ENCODE measurements at regions of chr2 and their contacts with region 1.

Region 1: GRCh38 chr2:121649596-121650314 is 493 bp upstream of the CLASP1 start:
- DNase-seq: peak; percentile 97
- ATAC-seq: peak; percentile 96
- H3K4me3 Mint-ChIP-seq: peak overlapping the region; percentile 93
- H3K27ac Mint-ChIP-seq: peak overlapping the region; percentile 98
- H3K4me1 Mint-ChIP-seq: peaks cover 64% of the 10 kb centered on the region
- H3K27me3 Mint-ChIP-seq: no peaks in the 10 kb centered on the region
- CTCF ChIP-seq: no peak

Region 2: GRCh38 chr2:121596221-121597080 is 53.3 kb before region 1 on chr2:
- CTCF ChIA-PET with region 1: interaction called, 5 read pairs
- POLR2A ChIA-PET with region 1: interaction called, 5 read pairs
- intact Hi-C with region 1: loop called (anchors 10 kb)
- DNase-seq: peak; percentile 60
- ATAC-seq: peak; percentile 92
- H3K4me3 Mint-ChIP-seq: peak overlapping the region; percentile 77
- H3K27ac Mint-ChIP-seq: peak overlapping the region; percentile 94
- H3K4me1 Mint-ChIP-seq: peaks cover 47% of the 10 kb centered on the region
- H3K27me3 Mint-ChIP-seq: no peaks in the 10 kb centered on the region
- CTCF ChIP-seq: no peak

Region 3: DNA sequence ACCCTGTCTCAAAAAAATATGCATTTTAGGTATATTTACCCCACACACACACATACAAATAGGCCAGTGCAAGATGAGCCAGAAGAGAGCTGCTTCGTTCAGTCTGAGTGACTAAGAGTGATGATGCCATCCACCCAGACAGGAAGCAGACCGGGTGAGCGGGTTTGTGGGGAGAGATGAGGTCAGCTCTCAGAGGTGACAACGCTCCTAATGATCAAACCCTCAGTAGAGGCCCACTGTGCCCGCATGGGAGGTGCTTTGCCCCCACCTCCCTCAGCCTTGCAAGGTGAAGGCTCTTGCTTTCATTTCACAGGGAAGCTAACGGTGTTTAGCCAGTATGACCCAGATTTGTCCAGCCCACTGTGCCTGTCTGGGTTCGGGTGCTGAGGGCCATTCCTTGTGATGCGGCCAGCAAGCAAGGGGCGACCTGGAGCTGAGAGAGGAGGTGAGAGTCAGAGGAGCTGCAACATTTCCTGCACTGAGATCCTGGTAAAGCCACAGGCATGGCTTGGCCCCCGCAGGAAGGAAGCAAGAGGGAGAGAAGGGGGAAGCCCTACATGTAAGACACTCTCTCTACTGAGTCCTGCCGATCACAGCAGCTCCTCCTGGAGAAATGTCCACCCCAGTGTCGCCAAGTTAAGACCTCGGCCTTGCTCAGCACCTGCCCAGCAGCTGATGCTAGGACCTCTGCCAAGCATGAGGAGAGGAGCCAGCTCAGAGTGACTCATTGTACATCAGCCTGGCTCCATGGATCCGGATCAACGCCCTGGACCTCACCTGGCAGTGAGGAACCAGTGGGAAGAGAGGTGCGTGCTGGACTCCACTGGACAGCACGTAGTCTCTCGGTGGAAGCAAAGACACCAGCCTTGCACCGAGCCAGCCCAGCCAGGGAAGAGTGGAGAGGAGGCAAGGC is 49.9 kb after region 1 on chr2:
- CTCF ChIA-PET with region 1: interaction called, 4 read pairs
- POLR2A ChIA-PET with region 1: interaction called, 29 read pairs
- intact Hi-C with region 1: loop called (anchors 5 kb)
- DNase-seq: peak; percentile 97
- ATAC-seq: peak; percentile 97
- H3K4me3 Mint-ChIP-seq: peak overlapping the region; percentile 71
- H3K27ac Mint-ChIP-seq: peak overlapping the region; percentile 93
- H3K4me1 Mint-ChIP-seq: peaks cover 42% of the 10 kb centered on the region
- H3K27me3 Mint-ChIP-seq: no peaks in the 10 kb centered on the region
- CTCF ChIP-seq: no peak

Region 4: DNA sequence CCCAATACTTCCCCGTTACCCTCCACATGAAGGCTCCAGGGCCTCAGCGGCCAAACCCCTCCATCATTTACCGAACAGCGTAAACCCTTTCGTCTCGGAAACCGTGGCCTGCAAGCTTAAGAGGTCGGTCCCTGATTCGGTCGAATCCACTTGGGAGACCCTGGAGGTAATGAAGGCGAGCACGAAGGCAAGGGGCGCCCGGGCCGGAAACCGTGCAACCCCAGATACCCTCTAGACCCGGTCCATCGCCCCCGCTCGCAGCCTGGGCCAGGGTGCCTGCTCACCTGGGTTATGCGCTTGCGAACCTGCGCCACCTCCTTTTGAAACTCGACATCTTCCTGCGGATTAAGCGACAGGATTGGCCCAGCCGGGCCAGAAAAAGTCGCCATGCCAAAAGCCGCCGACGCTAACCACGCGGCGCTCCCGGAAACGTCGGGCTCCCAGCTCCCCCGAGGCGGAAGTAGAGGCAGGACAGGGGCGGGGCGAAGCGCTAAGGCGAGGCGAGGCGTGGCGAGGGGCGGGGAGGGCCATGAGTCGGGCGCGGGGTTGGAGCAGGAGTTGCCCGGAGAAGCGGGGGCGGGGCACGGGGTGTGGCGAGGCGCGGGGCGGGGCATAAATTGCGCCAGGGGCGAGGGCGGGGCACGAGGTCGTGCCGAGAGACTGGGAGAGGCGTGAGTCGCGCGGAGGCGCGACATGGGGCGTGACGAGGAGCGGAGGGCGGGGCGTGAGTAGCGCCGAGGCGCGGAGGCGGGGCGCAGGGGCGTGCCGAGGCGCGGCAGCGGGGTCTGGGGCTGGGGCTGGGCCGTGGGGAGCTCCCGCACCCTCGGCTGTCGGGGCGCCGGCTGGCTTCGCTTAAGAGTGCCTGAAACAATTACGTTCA is 86.9 kb after region 1 on chr2 and contains the start of gene NIFK:
- CTCF ChIA-PET with region 1: interaction called, 3 read pairs
- POLR2A ChIA-PET with region 1: interaction called, 10 read pairs
- intact Hi-C with region 1: no loop called
- DNase-seq: peak; percentile 100
- ATAC-seq: peak; percentile 93
- H3K4me3 Mint-ChIP-seq: peak within 1 kb of the TSS; percentile 89
- H3K27ac Mint-ChIP-seq: peak within 1 kb of the TSS; percentile 97
- H3K4me1 Mint-ChIP-seq: peaks cover 41% of the 10 kb centered on the region
- H3K27me3 Mint-ChIP-seq: no peaks in the 10 kb centered on the region
- CTCF ChIP-seq: no peak
- total RNA-seq, gene NIFK: 115 to 134 TPM

Measured in activated CD8-positive, alpha-beta T cell treated with anti-CD3 and anti-CD28 coated beads for 36 hours (primary cell).